T-cell (primary cell): ENCODE measurements at regions of chr22 and their contacts with region 1.

Region 1: DNA sequence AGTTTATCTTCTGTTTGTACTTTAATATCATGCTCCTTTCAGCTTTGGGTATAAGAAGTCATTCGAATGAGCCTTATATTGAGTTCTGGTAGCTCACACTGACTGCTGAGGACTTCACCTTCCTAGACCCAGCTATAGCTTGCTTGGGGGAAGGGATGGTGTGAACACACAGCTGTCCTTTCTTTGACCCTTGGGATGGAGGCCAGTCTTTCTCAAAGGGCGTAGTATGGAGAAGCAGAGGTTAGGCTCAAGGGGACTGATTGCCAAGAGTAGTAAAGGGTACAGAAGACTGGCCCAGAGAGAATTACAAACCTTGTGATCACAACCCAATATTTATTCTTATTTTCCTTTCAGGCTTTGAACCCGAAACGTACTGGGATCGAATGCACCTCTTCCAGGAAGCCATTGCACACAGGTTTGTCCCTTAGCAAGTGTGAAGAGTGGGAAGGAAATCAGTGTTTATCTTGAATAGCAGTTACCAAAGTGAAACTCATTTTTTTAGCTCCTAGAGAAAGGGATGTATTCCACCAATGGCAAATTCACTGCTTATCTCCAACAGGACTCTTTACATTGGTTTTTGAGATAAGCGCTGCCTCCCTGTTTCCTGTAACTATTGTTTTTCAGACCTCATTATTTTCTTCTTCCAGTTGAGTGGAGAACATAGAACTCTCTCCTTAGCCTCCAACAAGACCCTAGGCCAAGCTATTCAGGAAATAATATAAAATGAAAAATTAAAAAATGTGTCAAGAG is 42.8 kb upstream of the YWHAH start:
- DNase-seq: no peak
- ATAC-seq: no peak
- H3K4me3 ChIP-seq: no peak overlapping the region
- H3K4me3 Mint-ChIP-seq: no peak overlapping the region
- H3K27ac ChIP-seq: no peak overlapping the region
- H3K27ac Mint-ChIP-seq: no peak overlapping the region
- H3K4me1 ChIP-seq: no peaks in the 10 kb centered on the region
- H3K4me1 Mint-ChIP-seq: no peaks in the 10 kb centered on the region
- H3K27me3 ChIP-seq: no peaks in the 10 kb centered on the region
- H3K27me3 Mint-ChIP-seq: no peaks in the 10 kb centered on the region

Region 2: DNA sequence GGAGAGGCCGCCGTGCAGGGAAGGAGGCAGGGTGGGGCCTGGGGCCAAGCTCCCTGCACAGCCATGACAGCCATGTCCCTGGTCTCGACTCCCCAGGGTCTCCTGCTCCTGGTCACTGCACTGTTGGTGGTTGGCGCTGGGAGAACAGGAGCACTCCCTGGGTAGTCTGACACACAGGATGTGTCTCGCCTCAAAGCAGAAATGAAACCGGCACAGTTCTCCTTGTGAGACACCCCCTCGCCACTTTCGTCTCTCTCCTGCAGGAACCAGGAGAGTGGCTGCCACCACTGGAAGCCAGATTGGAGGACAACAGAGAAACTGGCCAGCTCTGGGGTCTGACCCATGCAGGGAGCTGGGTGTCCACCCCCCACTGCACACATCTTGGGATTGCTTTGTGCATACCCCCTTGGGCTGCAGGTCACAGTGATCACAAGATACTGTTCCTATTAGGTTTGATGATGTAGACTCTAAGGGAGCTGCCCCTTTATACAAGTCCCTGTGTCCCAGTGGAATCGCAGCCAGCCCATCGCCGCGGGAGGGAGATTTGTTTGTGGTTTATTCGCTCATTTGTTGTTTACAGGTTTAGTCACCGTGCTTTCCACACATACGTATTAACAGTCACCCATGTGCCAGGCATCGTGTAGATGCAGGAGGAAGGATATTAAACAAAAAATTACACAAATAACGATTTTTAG is 15.8 kb after region 1 on chr22:
- CTCF ChIA-PET with region 1: no interaction called
- POLR2A ChIA-PET with region 1: interaction called in 1 of 2 experiments, 10 read pairs
- DNase-seq: peak in 1 of 35 experiments; percentile 28
- ATAC-seq: peak in 1 of 4 experiments; percentile 35
- H3K4me3 ChIP-seq: no peak overlapping the region
- H3K4me3 Mint-ChIP-seq: peak overlapping the region in 1 of 3 donors; percentile 15
- H3K27ac ChIP-seq: no peak overlapping the region
- H3K27ac Mint-ChIP-seq: peak overlapping the region in 1 of 2 donors; percentile 22
- H3K4me1 ChIP-seq: peaks cover 0 to 7% of the 10 kb centered on the region in 2 experiments
- H3K4me1 Mint-ChIP-seq: peaks cover 0 to 10% (median 5%) of the 10 kb centered on the region in 3 donors
- H3K27me3 ChIP-seq: no peaks in the 10 kb centered on the region
- H3K27me3 Mint-ChIP-seq: no peaks in the 10 kb centered on the region